PC-3 (cell line): ENCODE measurements at regions of chr5 and their contacts with region 1.

Region 1: DNA sequence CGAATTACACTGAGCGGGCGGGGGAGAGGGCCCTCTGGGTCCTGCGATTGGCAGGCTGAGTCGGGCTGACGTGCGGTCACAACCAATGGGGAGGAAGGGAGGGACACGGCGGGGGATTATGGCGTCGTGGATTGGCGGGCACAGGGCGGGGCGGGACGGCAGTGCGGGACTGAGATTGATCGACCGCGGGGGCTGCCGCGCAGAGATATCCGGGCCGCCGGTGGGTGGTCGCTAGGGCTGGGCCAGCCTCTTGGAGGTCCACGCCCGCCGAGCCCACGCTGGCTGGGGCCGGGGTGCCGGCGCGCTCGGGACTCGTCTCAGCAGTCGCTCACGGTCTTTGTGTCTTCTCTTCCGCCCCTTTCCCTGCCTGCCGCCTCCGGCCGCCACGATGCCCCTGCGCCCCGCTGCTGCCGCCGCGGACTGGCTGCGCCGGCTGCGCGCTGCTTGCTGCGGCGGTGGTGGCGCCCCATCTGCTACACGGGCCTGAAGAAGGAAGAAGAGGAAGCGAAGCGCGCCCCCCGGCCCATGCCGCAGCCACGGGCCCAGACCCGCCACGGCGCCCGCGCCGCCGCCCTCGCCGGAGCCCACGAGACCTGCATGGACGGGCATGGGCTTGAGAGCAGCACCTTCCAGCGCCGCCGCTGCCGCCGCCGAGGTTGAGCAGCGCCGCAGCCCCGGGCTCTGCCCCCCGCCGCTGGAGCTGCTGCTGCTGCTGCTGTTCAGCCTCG is at the start of gene RGMB:
- DNase-seq: peak; percentile 99
- ATAC-seq: peak; percentile 69
- H3K4me3 ChIP-seq: peak within 1 kb of the TSS; percentile 89
- H3K27ac ChIP-seq: peak within 1 kb of the TSS; percentile 83
- H3K4me1 ChIP-seq: peaks cover 30% of the 10 kb centered on the region
- H3K27me3 ChIP-seq: no peaks in the 10 kb centered on the region
- CTCF ChIP-seq: no peak
- total RNA-seq, gene RGMB: 31.1 and 37.3 TPM in 2 replicates

Region 2: DNA sequence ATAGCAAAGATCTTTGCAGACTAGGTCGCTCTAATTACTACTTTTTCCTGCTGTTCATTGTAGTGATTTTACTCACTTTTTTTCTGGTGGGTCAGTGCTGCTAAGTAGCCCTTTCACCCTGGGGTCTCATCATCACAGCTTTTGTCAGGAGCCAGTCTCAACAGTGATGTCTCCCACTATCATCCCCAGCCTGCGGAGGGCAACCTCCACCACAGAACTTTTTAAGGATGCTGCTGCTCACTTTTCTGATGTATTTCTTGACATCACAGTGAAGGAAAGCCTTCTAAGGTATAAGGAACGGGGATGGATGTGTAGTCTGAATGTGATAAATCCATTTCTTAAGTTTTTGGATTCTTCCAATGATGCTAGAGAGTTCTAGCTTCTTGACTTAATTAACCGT is 1348.1 kb before region 1 on chr5:
- CTCF ChIA-PET with region 1: no interaction called
- POLR2A ChIA-PET with region 1: no interaction called
- intact Hi-C with region 1: loop called (anchors 5 kb)
- DNase-seq: peak; percentile 38
- ATAC-seq: no peak; the same call in 1 of the 2 replicates
- H3K4me3 ChIP-seq: no peak overlapping the region
- H3K27ac ChIP-seq: no peak overlapping the region
- H3K4me1 ChIP-seq: no peaks in the 10 kb centered on the region
- H3K27me3 ChIP-seq: no peaks in the 10 kb centered on the region
- CTCF ChIP-seq: peak; percentile 56

Region 3: GRCh38 chr5:97764700-97765099 is 1008.9 kb before region 1 on chr5:
- CTCF ChIA-PET with region 1: no interaction called
- POLR2A ChIA-PET with region 1: no interaction called
- intact Hi-C with region 1: no loop called
- DNase-seq: peak; percentile 86
- ATAC-seq: peak; percentile 100
- H3K4me3 ChIP-seq: no peak overlapping the region
- H3K27ac ChIP-seq: no peak overlapping the region
- H3K4me1 ChIP-seq: peaks cover 13% of the 10 kb centered on the region
- H3K27me3 ChIP-seq: no peaks in the 10 kb centered on the region
- CTCF ChIP-seq: no peak

Region 4: GRCh38 chr5:97838214-97838613 is 935.4 kb before region 1 on chr5:
- CTCF ChIA-PET with region 1: no interaction called
- POLR2A ChIA-PET with region 1: no interaction called
- intact Hi-C with region 1: loop called (anchors 10 kb)
- DNase-seq: peak; percentile 96
- ATAC-seq: peak; percentile 81
- H3K4me3 ChIP-seq: no peak overlapping the region
- H3K27ac ChIP-seq: 0 out of 2 replicates have a peak overlapping the region, but pooled peaks have one; percentile 9
- H3K4me1 ChIP-seq: peaks cover 29% of the 10 kb centered on the region
- H3K27me3 ChIP-seq: peaks cover 5% of the 10 kb centered on the region; the same call in 1 of the 2 replicates
- CTCF ChIP-seq: no peak

Region 5: DNA sequence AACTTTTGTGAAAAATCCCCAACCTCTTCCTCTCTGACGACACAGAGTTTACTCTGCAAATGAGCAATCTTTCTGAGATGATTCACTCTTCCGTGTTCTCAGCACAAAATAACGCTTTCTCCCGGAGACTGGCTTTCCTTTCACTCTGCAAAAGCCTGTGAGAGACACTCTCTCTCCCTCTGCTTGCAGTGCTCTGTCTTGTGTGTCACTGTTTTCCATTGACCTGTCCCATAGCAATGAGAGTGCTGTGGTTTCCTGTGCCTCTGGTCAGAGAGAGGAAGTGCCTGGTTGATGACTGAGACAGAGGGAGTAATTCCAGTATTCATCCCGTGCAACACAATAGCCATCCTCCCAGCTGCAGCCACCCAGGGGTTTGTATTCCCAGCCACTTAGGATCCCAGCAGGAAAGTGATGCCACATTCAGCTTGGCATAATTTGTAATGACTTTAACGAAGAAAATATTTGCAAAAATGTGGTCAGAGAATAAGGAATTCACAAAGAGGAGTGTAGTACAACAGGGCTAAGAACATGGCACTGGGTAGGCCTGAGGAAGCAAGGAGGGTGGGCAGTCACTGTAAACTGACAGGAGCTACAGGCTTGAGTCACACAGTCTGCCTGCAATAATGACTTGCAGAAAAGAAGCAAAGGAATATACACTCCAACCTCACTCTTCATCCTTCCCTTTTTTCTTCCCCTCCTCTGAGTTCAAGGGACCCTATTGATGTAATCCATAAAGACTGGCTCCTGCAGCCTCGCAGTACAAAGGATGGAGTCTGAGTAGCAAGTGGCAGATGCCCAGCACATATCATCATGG is 463.6 kb before region 1 on chr5:
- CTCF ChIA-PET with region 1: no interaction called
- POLR2A ChIA-PET with region 1: interaction called, 15 read pairs
- intact Hi-C with region 1: loop called (anchors 2 kb)
- DNase-seq: peak; percentile 99
- ATAC-seq: peak; percentile 90
- H3K4me3 ChIP-seq: peak overlapping the region; percentile 52; the same call in 1 of the 2 replicates
- H3K27ac ChIP-seq: peak overlapping the region; percentile 95
- H3K4me1 ChIP-seq: peaks cover 68% of the 10 kb centered on the region
- H3K27me3 ChIP-seq: no peaks in the 10 kb centered on the region
- CTCF ChIP-seq: no peak

Region 6: DNA sequence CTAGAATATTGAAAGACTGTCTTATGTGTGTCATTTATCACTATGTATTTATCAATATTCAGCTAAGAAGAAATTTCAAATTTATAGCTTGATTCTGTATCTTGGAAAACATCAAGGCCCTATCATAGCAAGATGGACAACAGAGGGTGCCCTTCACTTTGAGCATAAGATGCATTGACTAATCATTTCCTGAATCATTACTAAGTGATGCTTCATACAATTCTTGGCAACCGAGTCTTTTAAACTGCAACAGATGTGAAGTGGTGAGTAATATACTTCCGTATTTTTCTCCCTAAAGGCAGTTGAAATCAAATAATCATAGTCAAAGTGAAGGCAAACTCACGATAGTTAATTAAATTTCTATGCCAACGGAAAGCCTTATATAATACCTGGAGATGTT is 318.7 kb before region 1 on chr5:
- CTCF ChIA-PET with region 1: interaction called, 37 read pairs
- POLR2A ChIA-PET with region 1: no interaction called
- intact Hi-C with region 1: loop called (anchors 1 kb)
- DNase-seq: peak; percentile 97
- ATAC-seq: peak; percentile 98
- H3K4me3 ChIP-seq: peak overlapping the region; percentile 48
- H3K27ac ChIP-seq: peak overlapping the region; percentile 54
- H3K4me1 ChIP-seq: peaks cover 18% of the 10 kb centered on the region
- H3K27me3 ChIP-seq: no peaks in the 10 kb centered on the region
- CTCF ChIP-seq: peak; percentile 78

Region 7: GRCh38 chr5:98750693-98751092 is 22.9 kb before region 1 on chr5:
- CTCF ChIA-PET with region 1: interaction called, 12 read pairs
- POLR2A ChIA-PET with region 1: interaction called, 10 read pairs
- intact Hi-C with region 1: no loop called
- DNase-seq: peak; percentile 46
- ATAC-seq: peak; percentile 16; the same call in 1 of the 2 replicates
- H3K4me3 ChIP-seq: no peak overlapping the region
- H3K27ac ChIP-seq: no peak overlapping the region
- H3K4me1 ChIP-seq: peaks cover 21% of the 10 kb centered on the region
- H3K27me3 ChIP-seq: no peaks in the 10 kb centered on the region
- CTCF ChIP-seq: peak; percentile 61

Region 8: DNA sequence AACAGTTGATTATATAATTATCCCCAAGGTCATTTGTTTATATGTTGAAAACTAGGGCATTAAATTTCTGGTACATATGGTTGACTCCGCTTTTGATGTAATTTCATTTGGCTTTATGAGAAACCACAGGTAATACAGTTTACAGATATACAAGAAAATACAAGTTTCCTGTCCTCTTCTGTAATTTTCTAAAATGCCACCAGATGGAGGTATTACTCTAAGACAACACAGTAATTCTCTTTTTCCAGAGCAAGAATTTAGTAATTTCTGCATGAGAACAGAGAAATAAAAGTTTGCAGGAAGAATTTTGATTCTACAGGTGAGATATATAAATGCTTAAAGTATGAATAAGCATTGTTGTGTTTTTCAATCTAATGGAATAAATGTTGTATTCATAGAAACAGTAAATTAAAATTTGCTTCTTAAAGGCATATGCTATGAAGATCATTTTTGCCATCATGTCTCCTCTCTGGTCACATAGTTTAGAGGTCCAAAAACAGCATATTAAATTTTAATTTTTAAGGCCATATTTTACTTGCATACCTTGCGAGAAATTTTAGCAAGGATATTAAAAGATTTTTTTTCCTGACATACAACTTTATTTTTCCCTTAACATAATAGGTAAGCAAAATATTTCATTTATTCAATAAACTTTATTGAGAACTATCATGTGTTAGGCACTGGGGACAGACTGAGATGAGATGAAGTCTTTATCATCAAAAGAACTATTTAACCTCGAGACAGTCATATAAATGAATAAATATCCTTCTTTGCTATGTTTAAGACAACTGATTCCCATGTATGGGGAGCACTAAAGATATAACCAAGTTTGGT is 132.4 kb after region 1 on chr5:
- CTCF ChIA-PET with region 1: no interaction called
- POLR2A ChIA-PET with region 1: no interaction called
- intact Hi-C with region 1: no loop called
- DNase-seq: peak; percentile 83
- ATAC-seq: peak; percentile 14; the same call in 1 of the 2 replicates
- H3K4me3 ChIP-seq: no peak overlapping the region
- H3K27ac ChIP-seq: peak overlapping the region; percentile 81
- H3K4me1 ChIP-seq: peaks cover 52% of the 10 kb centered on the region
- H3K27me3 ChIP-seq: no peaks in the 10 kb centered on the region
- CTCF ChIP-seq: peak; percentile 92

Region 9: DNA sequence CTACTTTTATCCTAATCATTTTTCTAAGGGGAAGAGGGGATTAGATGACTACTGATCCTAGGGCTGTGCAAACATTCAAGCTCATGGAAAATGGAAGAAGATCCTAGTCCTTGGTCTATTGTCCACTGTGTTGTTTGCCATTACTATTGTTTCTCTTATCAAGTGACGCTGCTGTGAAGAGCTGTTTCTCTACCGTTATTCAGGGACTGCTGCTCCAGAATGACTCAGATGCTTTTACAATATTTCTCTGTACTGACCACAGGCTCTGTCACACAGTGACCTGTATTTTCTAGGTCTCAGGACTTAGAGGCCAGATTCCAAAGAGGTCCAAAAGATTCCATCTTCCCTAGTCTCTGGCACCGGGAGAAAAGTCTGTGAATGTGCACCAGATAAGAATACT is 314.7 kb after region 1 on chr5:
- CTCF ChIA-PET with region 1: no interaction called
- POLR2A ChIA-PET with region 1: no interaction called
- intact Hi-C with region 1: no loop called
- DNase-seq: no peak
- ATAC-seq: peak; percentile 20; the same call in 1 of the 2 replicates
- H3K4me3 ChIP-seq: no peak overlapping the region
- H3K27ac ChIP-seq: no peak overlapping the region
- H3K4me1 ChIP-seq: no peaks in the 10 kb centered on the region
- H3K27me3 ChIP-seq: peaks cover 8% of the 10 kb centered on the region
- CTCF ChIP-seq: no peak